ENCODE measurements at regions of chr9 and their contacts with region 1.

Region 1: DNA sequence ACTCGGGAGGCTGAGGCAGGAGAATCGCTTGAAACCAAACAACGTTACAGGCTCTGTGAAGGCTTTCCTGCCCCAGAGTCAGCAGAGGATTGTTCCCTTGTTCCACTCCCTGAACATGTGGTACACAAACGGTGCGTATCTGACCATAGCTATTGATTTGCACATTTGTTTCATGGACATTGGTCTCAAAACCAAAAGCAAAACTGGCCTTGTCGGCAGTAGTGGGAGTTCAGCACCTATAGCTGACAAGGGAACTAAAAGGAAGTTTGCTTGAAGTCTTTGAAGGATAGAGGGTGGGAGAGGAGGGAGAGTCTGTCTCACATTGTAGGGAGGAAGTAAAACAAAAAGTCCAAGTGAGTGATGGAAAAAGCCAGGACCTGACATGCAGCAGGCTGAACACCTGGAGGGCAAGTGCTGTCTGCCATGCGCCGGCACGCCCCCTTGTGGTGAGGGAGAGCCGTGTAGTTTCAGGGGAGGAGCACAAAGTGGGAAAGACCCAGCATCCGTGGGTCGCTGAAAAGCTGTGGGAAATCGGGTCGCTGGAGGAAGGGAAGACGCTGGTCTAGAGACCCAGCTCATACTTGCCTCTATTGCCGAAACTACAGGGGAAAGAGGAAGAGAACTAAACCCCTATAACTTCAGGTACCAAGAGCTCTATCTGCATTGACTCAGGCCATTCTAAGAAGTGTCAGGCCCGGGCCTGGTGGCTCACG is 58.0 kb downstream of the RAD23B start:
- DNase-seq: peak; percentile 86
- H3K4me3 ChIP-seq: no peak overlapping the region
- H3K27ac ChIP-seq: no peak overlapping the region
- H3K4me1 ChIP-seq: peaks cover 0 to 5% (median 0%) of the 10 kb centered on the region in 4 donors
- H3K27me3 ChIP-seq: no peaks in the 10 kb centered on the region
- CTCF ChIP-seq: peak; percentile 88 to 92 (median 90)
- EP300 ChIP-seq: no peak
- POLR2A ChIP-seq: no peak

Region 2: DNA sequence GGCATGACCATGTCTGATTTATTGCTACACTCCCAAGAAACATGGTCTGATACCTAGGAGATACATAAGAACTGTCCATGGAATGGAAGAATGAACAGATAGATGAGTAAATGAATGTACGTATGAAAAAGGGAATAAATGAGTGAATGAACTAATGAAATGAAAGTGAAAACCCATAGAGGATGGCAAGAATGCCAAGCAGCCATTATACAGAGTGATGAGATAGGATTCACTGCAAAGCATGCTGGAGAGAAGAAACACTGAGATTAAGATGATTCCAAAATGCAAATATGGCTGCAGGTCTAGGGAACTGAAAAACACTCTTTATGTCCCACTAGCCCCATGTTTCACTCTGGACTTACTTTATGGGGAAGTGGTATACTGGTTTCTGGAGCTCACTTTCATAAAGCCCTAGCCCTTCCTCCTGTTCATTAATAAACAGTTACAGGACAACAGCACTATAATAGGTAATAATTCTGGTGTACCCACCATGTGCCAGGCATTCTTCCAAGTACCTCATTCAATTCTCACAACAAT is 228.3 kb before region 1 on chr9:
- in situ Hi-C with region 1: no loop called
- intact Hi-C with region 1: no loop called
- DNase-seq: no peak
- H3K4me3 ChIP-seq: no peak overlapping the region
- H3K27ac ChIP-seq: no peak overlapping the region
- H3K4me1 ChIP-seq: no peaks in the 10 kb centered on the region
- H3K27me3 ChIP-seq: no peaks in the 10 kb centered on the region
- CTCF ChIP-seq: no peak
- EP300 ChIP-seq: no peak
- POLR2A ChIP-seq: no peak

Region 3: GRCh38 chr9:107243751-107244150 is 97.3 kb before region 1 on chr9:
- in situ Hi-C with region 1: loop called in 1 of 4 experiments (anchors 10 kb)
- intact Hi-C with region 1: loop called (anchors 10 kb)
- DNase-seq: peak; percentile 65
- H3K4me3 ChIP-seq: no peak overlapping the region
- H3K27ac ChIP-seq: peak overlapping the region in 2 of 4 donors; percentile 46 to 50
- H3K4me1 ChIP-seq: peaks cover 6 to 11% (median 10%) of the 10 kb centered on the region in 4 donors
- H3K27me3 ChIP-seq: no peaks in the 10 kb centered on the region
- CTCF ChIP-seq: no peak
- EP300 ChIP-seq: no peak
- POLR2A ChIP-seq: no peak

Region 4: DNA sequence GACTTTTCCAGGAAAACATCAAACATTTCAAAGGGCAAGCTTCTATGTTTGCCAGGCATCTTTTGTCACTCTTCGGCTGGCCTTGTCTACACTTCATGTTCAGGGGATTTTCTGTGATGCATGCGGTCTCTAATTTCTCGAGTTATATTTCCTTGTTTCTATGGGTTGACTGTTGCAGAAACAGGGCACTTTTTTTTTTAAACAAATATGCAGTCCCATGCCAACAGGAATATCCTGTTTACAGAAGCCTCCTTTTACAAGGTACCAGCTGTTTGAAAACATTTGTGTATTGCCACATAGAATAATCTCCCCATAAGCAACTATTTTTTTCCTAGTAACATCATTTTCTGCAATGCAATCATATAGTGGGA is 91.6 kb after region 1 on chr9:
- in situ Hi-C with region 1: no loop called
- intact Hi-C with region 1: no loop called
- DNase-seq: no peak
- H3K4me3 ChIP-seq: no peak overlapping the region
- H3K27ac ChIP-seq: peak overlapping the region in 1 of 4 donors; percentile 35
- H3K4me1 ChIP-seq: peaks cover 0 to 3% (median 0%) of the 10 kb centered on the region in 4 donors
- H3K27me3 ChIP-seq: no peaks in the 10 kb centered on the region
- CTCF ChIP-seq: no peak
- EP300 ChIP-seq: no peak
- POLR2A ChIP-seq: no peak